ENCODE measurements at regions of chr3 and their contacts with region 1.

Region 1: GRCh38 chr3:52056968-52057805 is 816 bp upstream of the DUSP7 start:
- DNase-seq: peak; percentile 92 to 96
- ATAC-seq: peak; percentile 74 to 90
- H3K4me3 ChIP-seq: peak overlapping the region; percentile 55
- H3K27ac ChIP-seq: peak overlapping the region; percentile 72 to 93
- H3K4me1 ChIP-seq: peaks cover 23% of the 10 kb centered on the region
- CTCF ChIP-seq: no peak
- EP300 ChIP-seq: no peak
- POLR2A ChIP-seq: no peak
- RAD21 ChIP-seq: no peak

Region 2: DNA sequence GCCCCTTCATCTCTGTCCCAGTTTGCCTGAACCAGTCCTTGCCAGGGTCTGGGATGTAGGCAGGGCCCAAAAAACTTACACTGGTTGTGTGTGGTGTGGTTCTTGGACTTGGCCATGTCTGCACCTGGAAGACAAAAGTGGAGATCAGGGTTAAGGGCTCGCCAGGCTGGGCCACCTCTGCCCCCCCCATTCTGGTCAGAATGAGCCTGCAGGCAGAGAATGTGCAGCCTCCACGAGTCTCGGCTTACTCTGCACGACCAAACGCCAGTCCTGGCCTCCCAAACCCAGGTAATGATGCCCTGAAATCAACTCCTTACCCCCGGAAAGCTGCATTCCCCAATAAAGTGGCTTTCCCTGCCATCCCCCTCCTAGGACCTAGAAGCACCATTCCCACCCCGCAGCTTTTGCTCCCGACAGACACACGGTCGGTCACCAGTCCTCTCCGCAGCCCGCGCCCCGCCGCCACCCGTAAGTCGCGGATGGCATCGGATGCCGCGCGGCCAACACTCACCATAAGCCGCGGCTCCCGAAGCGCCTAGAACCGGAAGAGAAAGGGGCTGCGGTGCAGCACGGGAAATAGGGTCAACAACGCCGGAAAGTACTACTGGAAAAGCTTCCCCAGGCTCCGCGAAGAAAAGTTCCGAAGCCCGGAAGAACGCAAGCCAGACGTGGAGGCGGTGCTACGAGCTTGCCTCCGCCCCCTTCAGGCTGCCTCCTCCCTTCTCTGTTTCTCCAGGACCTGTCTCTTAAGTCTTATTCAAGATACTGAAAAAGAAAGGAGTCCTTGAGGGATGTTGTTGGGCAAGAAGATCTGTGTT is 61.6 kb before region 1 on chr3 and contains the start of gene RPL29:
- CTCF ChIA-PET with region 1: interaction called, 36 read pairs
- POLR2A ChIA-PET with region 1: interaction called, 14 read pairs
- DNase-seq: peak; percentile 88 to 92
- ATAC-seq: peak; percentile 91 to 94
- H3K4me3 ChIP-seq: peak within 1 kb of the TSS; percentile 90
- H3K27ac ChIP-seq: peak within 1 kb of the TSS; percentile 92 to 97
- H3K4me1 ChIP-seq: peaks cover 31% of the 10 kb centered on the region; the same call in 2 of the 3 replicates
- CTCF ChIP-seq: no peak
- EP300 ChIP-seq: no peak
- POLR2A ChIP-seq: peak; percentile 78
- RAD21 ChIP-seq: 0 out of 5 replicates have a peak, but pooled peaks of 1 of the 2 experiments have one; percentile 10
- polyA plus RNA-seq, gene RPL29: 808 and 909 TPM in 2 replicates

Region 3: GRCh38 chr3:52014613-52015012 is 42.6 kb before region 1 on chr3:
- CTCF ChIA-PET with region 1: interaction called, 11 read pairs
- POLR2A ChIA-PET with region 1: no interaction called
- DNase-seq: no peak
- ATAC-seq: peak; percentile 30 to 78; a peak in 4 of 6 replicates
- H3K4me3 ChIP-seq: no peak overlapping the region
- H3K27ac ChIP-seq: no peak overlapping the region
- H3K4me1 ChIP-seq: no peaks in the 10 kb centered on the region
- CTCF ChIP-seq: no peak
- EP300 ChIP-seq: no peak
- POLR2A ChIP-seq: no peak
- RAD21 ChIP-seq: peak in 1 of 2 experiments; percentile 20; a peak in 1 of 5 replicates

Region 4: DNA sequence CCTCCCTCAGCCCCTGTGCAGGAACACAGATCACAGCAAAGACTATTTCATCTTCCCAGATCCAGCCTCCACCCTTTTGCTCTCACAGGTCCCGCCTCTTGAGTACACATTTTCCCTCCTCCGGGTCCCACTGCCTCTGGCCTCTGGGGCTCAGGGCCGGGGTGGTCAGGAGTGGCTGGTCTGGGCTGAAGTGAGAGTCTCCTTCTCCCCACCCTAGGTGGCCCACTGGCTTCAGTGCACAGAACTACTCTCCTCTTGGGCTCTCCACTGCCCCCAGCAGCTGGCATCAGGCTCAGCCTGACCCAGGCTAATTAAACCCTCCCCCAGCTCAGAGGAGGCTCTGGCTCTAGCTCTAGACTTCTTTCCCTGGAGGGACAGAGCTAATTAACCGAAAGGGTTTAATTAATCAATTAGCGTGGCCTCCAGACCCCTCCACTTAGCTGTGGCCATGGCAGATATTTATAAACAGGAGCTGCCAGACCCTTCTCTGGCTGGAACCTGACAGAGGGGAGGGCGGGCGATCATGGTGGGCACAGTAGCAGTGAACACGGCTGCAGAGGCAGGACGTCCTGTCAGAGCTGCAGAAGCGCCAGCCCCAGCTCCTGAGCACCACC is 16.0 kb before region 1 on chr3:
- CTCF ChIA-PET with region 1: interaction called, 14 read pairs
- POLR2A ChIA-PET with region 1: interaction called, 10 read pairs
- DNase-seq: no peak
- ATAC-seq: peak; percentile 35 to 73; a peak in 4 of 6 replicates
- H3K4me3 ChIP-seq: no peak overlapping the region
- H3K27ac ChIP-seq: peak overlapping the region in 1 of 2 experiments; percentile 14; a peak in 1 of 6 replicates
- H3K4me1 ChIP-seq: peaks cover 11% of the 10 kb centered on the region
- CTCF ChIP-seq: no peak; the same call in 2 of the 3 replicates
- EP300 ChIP-seq: no peak
- POLR2A ChIP-seq: no peak
- RAD21 ChIP-seq: no peak

Region 5: DNA sequence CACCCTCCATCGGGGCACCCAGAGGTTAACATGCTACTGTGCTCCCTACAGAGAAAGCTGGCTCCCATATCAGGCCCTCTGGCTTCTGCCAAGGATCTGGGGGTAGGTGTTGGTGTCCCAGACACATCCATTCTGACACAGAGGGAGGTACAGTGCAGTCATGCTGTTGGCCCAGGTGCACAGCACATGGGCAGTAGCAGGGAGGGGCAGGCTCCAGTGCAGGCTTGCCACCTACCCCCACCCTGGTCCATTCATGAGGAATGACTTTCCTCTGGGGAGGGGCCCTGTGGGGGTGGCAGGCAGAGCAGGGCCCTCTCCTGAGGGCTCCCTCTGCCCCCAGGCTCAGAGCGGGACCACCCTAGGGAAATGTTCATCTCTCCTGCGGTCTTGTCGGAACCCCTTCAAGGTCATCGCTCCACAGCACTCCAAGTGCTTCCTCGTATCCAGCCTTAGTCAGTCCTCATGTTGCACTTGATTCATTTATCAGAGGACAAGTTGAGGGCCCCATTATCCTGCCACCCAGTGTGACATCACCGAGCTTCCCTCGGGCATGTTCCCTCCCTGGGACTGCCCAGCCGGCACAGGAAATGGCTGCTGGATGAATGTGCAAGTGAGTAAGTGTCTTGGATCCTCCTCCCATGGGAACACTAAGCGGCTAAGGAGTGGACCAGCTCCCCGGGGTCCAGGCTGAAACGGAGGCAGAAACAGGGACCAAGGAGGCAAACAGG is 10.8 kb before region 1 on chr3:
- CTCF ChIA-PET with region 1: interaction called, 14 read pairs
- POLR2A ChIA-PET with region 1: interaction called, 10 read pairs
- DNase-seq: peak; percentile 69 to 80
- ATAC-seq: peak; percentile 73 to 90
- H3K4me3 ChIP-seq: no peak overlapping the region
- H3K27ac ChIP-seq: peak overlapping the region; percentile 86 to 88
- H3K4me1 ChIP-seq: peaks cover 33% of the 10 kb centered on the region
- CTCF ChIP-seq: no peak
- EP300 ChIP-seq: no peak
- POLR2A ChIP-seq: no peak
- RAD21 ChIP-seq: no peak

Region 6: GRCh38 chr3:52085681-52086282 is 28.6 kb after region 1 on chr3:
- CTCF ChIA-PET with region 1: interaction called, 12 read pairs
- POLR2A ChIA-PET with region 1: no interaction called
- DNase-seq: no peak
- ATAC-seq: no peak
- H3K4me3 ChIP-seq: no peak overlapping the region
- H3K27ac ChIP-seq: no peak overlapping the region
- H3K4me1 ChIP-seq: no peaks in the 10 kb centered on the region
- CTCF ChIP-seq: no peak
- EP300 ChIP-seq: no peak
- POLR2A ChIP-seq: no peak
- RAD21 ChIP-seq: no peak

Region 7: GRCh38 chr3:52123106-52123725 is 66.0 kb after region 1 on chr3:
- CTCF ChIA-PET with region 1: interaction called, 13 read pairs
- POLR2A ChIA-PET with region 1: no interaction called
- DNase-seq: peak; percentile 59 to 77
- ATAC-seq: peak; percentile 90 to 96
- H3K4me3 ChIP-seq: no peak overlapping the region
- H3K27ac ChIP-seq: no peak overlapping the region
- H3K4me1 ChIP-seq: peaks cover 11% of the 10 kb centered on the region; the same call in 2 of the 3 replicates
- CTCF ChIP-seq: peak; percentile 66
- EP300 ChIP-seq: no peak
- POLR2A ChIP-seq: no peak
- RAD21 ChIP-seq: peak; percentile 71 to 74